ENCODE measurements at regions of chrX and their contacts with region 1.

Region 1: DNA sequence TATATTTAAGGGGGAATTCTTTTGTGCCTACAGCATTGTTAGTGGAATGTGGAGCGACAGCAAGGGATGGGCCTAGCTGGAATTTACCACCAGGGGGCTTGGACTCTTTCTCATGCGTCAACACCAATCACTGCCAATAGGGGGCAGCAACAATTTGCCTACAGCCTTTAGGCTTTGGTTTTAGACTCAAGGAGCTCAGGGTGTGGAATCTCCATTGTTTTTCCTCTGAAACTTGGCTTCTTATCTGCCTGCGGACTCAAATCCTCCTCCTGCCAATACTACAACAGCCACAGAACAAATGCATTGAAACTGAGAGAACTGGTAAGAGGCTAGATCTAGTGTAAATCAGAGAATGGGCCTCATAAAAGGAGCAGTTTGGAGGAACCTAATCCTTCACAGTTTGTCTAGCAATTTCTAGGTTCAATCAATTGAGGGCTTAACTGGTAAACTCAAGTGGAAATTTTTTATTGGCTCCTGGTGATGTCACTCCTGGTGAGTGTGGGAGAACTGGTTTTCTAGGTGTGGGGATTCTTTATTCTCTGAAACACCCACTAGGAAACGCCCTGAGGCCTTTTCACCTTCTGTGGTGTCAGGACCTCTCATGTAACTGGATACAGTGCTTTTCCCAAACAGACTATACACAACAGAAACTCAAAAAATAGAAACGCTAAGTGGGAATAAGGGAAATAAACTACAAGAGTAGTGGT is 27.9 kb upstream of the TMSB4X start:
- DNase-seq: peak; percentile 95
- H3K4me3 ChIP-seq: no peak overlapping the region
- H3K27ac ChIP-seq: peak overlapping the region; percentile 86
- H3K4me1 ChIP-seq: peaks cover 16% of the 10 kb centered on the region
- H3K27me3 ChIP-seq: no peaks in the 10 kb centered on the region
- CTCF ChIP-seq: peak; percentile 100

Region 2: DNA sequence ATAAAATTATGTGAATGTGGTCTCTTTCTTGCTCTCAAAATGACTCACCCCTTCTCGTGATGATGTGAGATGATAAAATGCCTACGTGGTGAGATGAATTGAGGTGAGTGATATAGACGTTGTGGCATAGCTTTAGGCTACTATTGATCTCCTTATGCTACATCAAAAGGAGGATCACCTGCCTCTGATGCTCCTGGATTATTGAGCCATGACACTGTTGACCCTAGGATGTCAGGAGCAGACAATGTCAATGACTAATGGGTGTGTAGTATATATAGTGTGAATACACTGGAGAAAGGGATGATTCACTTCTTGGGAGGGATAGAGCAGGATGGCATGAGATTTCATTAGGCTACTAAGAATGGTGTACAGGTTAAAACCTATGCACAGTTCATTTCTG is 366.4 kb before region 1 on chrX:
- CTCF ChIA-PET with region 1: no interaction called
- dilution Hi-C with region 1: no loop called
- in situ Hi-C with region 1: no loop called
- intact Hi-C with region 1: no loop called
- DNase-seq: peak; percentile 98
- H3K4me3 ChIP-seq: no peak overlapping the region
- H3K27ac ChIP-seq: peak overlapping the region; percentile 82
- H3K4me1 ChIP-seq: peaks cover 34% of the 10 kb centered on the region
- H3K27me3 ChIP-seq: no peaks in the 10 kb centered on the region
- CTCF ChIP-seq: no peak

Region 3: GRCh38 chrX:12974796-12975669 is 28.0 kb after region 1 on chrX and contains the start of gene TMSB4X:
- CTCF ChIA-PET with region 1: no interaction called
- dilution Hi-C with region 1: no loop called
- in situ Hi-C with region 1: no loop called
- intact Hi-C with region 1: loop called (anchors 1 kb)
- DNase-seq: peak; percentile 76
- H3K4me3 ChIP-seq: peak within 1 kb of the TSS; percentile 79 to 87 (median 80)
- H3K27ac ChIP-seq: peak within 1 kb of the TSS; percentile 93
- H3K4me1 ChIP-seq: peaks cover 7% of the 10 kb centered on the region
- H3K27me3 ChIP-seq: no peaks in the 10 kb centered on the region
- CTCF ChIP-seq: no peak
- total RNA-seq, gene TMSB4X: 1,481 to 1,998 TPM

Region 4: DNA sequence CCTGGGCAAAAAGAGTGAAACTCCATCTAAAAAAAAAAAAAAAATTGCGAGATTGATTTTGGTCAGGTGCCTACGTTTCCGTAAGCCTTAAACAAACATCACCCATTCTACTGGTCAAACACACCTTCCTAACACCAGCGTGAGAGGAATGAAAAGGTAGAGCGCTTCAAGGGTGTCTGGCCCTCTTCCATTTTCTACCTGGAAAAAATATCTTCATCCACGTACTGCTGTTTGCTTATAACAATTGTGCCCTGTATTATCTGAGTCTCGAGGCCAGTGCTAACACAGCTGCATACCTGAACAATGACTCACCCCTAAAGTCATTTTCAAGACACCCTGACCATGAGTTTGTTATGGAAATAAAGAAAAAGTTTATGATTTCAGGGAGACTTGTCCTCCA is 41.8 kb after region 1 on chrX:
- CTCF ChIA-PET with region 1: no interaction called
- dilution Hi-C with region 1: no loop called
- in situ Hi-C with region 1: no loop called
- intact Hi-C with region 1: no loop called
- DNase-seq: peak; percentile 91
- H3K4me3 ChIP-seq: no peak overlapping the region
- H3K27ac ChIP-seq: peak overlapping the region; percentile 38
- H3K4me1 ChIP-seq: peaks cover 34% of the 10 kb centered on the region
- H3K27me3 ChIP-seq: no peaks in the 10 kb centered on the region
- CTCF ChIP-seq: no peak

Region 5: DNA sequence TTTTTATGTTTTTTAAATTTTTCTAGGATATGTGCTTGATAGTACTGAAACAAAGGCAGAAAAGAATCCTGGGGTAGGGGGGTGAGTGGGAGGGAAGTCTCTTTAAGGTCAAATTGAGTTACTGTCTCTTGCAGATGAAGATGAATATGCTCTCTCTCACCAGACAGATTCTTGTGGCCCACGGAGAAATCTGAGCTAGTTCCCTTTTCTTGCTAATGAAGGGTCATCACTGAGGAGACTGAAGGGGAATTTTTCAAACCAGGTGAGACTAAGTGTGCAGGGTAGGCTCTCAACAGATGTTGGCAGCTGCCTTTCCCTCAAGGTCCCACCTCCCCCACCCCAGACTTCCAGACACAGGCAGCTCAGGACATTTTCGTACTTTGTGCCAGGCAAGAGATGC is 75.9 kb after region 1 on chrX:
- CTCF ChIA-PET with region 1: no interaction called
- dilution Hi-C with region 1: no loop called
- in situ Hi-C with region 1: no loop called
- intact Hi-C with region 1: loop called (anchors 1 kb)
- DNase-seq: no peak
- H3K4me3 ChIP-seq: no peak overlapping the region
- H3K27ac ChIP-seq: no peak overlapping the region
- H3K4me1 ChIP-seq: no peaks in the 10 kb centered on the region
- H3K27me3 ChIP-seq: no peaks in the 10 kb centered on the region
- CTCF ChIP-seq: no peak

Region 6: DNA sequence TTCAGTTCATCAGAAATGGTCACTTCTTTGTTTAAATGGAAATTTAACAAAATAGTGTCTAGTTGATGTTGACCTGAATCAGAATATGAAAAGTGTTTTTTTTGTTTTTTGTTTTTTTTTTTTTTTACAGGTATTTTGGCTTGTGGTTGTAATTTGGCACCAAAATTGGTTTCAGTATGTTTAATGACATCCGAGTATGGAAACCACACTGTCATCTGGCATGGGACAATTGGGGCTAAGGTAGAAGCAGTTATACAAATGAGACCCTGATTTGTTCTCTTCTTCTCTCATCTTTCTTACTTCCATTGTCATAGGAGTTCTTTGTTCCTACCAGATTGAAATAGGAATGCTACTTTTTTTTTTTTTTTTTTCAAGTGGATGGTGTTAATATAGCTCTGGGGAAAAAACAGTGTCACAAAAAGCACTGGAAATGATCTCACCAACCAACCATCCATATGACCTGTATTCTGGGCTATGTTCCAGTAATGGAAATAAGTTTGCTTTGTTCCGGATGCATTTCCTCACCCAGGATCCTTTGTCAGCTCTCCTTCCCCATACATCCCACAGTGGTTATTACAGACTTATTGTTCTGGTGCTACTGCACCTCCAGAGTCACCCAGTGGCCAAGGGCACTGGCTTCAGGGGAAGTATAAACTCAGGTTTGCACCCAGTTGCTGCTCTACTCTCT is 277.0 kb after region 1 on chrX:
- CTCF ChIA-PET with region 1: interaction called, 22 read pairs
- dilution Hi-C with region 1: no loop called
- in situ Hi-C with region 1: no loop called
- intact Hi-C with region 1: loop called (anchors 1 kb)
- DNase-seq: peak; percentile 96
- H3K4me3 ChIP-seq: no peak overlapping the region
- H3K27ac ChIP-seq: peak overlapping the region; percentile 44
- H3K4me1 ChIP-seq: peaks cover 34% of the 10 kb centered on the region
- H3K27me3 ChIP-seq: no peaks in the 10 kb centered on the region
- CTCF ChIP-seq: peak; percentile 22 to 35

Region 7: GRCh38 chrX:13293700-13294099 is 346.7 kb after region 1 on chrX:
- CTCF ChIA-PET with region 1: no interaction called
- dilution Hi-C with region 1: no loop called
- in situ Hi-C with region 1: no loop called
- intact Hi-C with region 1: loop called (anchors 1 kb)
- DNase-seq: peak; percentile 95
- H3K4me3 ChIP-seq: no peak overlapping the region
- H3K27ac ChIP-seq: peak overlapping the region; percentile 93
- H3K4me1 ChIP-seq: peaks cover 11% of the 10 kb centered on the region
- H3K27me3 ChIP-seq: no peaks in the 10 kb centered on the region
- CTCF ChIP-seq: no peak

Region 8: DNA sequence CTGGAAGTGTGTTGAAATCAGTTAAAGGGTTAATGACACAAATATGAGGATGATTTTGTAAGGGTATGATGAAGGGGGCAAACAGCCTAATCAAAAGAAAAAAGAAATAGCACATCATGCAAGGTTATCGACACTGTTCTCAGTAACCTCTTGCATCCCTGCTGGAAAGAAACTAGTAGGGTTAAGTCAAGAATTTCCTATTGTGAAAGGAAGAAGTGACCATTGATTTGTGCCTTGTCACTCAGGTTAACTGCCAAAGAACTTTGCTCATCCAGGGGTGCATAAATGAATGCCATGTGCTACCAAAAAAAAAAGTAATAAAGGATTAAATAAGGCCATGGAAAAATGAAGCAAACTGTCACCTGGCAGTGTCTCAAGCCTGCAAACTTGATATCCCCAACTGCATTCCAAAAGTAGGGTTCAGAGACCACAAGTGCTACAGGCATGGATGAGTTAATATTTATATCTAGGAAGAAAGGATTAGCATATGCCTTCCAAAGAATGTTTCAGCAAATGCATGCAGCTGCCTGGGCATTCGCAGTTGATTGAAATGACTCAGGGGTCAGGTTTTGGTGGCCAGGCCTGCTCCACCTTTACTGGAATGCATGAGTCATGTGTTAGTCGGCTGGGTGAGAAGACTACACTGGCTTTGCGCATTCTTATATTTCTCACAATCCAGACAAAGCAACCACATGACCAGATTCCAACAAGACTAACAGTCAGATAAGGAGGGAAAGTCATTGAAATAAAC is 451.3 kb after region 1 on chrX:
- CTCF ChIA-PET with region 1: no interaction called
- dilution Hi-C with region 1: no loop called
- in situ Hi-C with region 1: no loop called
- intact Hi-C with region 1: loop called (anchors 1 kb)
- DNase-seq: peak; percentile 100
- H3K4me3 ChIP-seq: no peak overlapping the region
- H3K27ac ChIP-seq: peak overlapping the region; percentile 95
- H3K4me1 ChIP-seq: peaks cover 30% of the 10 kb centered on the region
- H3K27me3 ChIP-seq: no peaks in the 10 kb centered on the region
- CTCF ChIP-seq: no peak

Measured in mammary epithelial cell (primary cell).